CD4-positive, alpha-beta T cell (primary cell): ENCODE measurements at regions of chr1 and their contacts with region 1.

Region 1: GRCh38 chr1:200669314-200670241 is at the start of gene DDX59:
- DNase-seq: peak; percentile 75 to 95 (median 86)
- ATAC-seq: peak; percentile 91
- H3K4me3 ChIP-seq: peak within 1 kb of the TSS; percentile 82
- H3K4me3 Mint-ChIP-seq: peak within 1 kb of the TSS; percentile 93
- H3K27ac ChIP-seq: peak within 1 kb of the TSS; percentile 75 to 91
- H3K27ac Mint-ChIP-seq: peak within 1 kb of the TSS; percentile 78
- H3K4me1 ChIP-seq: peaks cover 18% of the 10 kb centered on the region
- H3K4me1 Mint-ChIP-seq: peaks cover 55% of the 10 kb centered on the region
- H3K27me3 ChIP-seq: no peaks in the 10 kb centered on the region
- H3K27me3 Mint-ChIP-seq: no peaks in the 10 kb centered on the region
- CTCF ChIP-seq: no peak
- total RNA-seq, gene DDX59: 24.7 to 27.6 TPM

Region 2: GRCh38 chr1:199913318-199913717 is 756.3 kb before region 1 on chr1:
- CTCF ChIA-PET with region 1: no interaction called
- POLR2A ChIA-PET with region 1: no interaction called
- intact Hi-C with region 1: no loop called
- DNase-seq: no peak
- ATAC-seq: no peak
- H3K4me3 ChIP-seq: no peak overlapping the region
- H3K4me3 Mint-ChIP-seq: no peak overlapping the region
- H3K27ac ChIP-seq: no peak overlapping the region
- H3K27ac Mint-ChIP-seq: no peak overlapping the region
- H3K4me1 ChIP-seq: no peaks in the 10 kb centered on the region
- H3K4me1 Mint-ChIP-seq: no peaks in the 10 kb centered on the region
- H3K27me3 ChIP-seq: no peaks in the 10 kb centered on the region
- H3K27me3 Mint-ChIP-seq: peaks cover 6% of the 10 kb centered on the region
- CTCF ChIP-seq: no peak

Region 3: GRCh38 chr1:200409761-200410565 is 259.6 kb before region 1 on chr1 and contains the start of gene ZNF281:
- CTCF ChIA-PET with region 1: no interaction called
- POLR2A ChIA-PET with region 1: interaction called, 4 read pairs
- intact Hi-C with region 1: loop called in 1 of 2 experiments (anchors 10 kb)
- DNase-seq: peak; percentile 86 to 97 (median 92)
- ATAC-seq: peak; percentile 96
- H3K4me3 ChIP-seq: peak within 1 kb of the TSS; percentile 93
- H3K4me3 Mint-ChIP-seq: peak within 1 kb of the TSS; percentile 98
- H3K27ac ChIP-seq: peak within 1 kb of the TSS; percentile 68 to 81
- H3K27ac Mint-ChIP-seq: peak within 1 kb of the TSS; percentile 87
- H3K4me1 ChIP-seq: peaks cover 25% of the 10 kb centered on the region
- H3K4me1 Mint-ChIP-seq: peaks cover 56% of the 10 kb centered on the region
- H3K27me3 ChIP-seq: no peaks in the 10 kb centered on the region
- H3K27me3 Mint-ChIP-seq: no peaks in the 10 kb centered on the region
- CTCF ChIP-seq: no peak
- total RNA-seq, gene ZNF281: 27.6 to 29.3 TPM

Region 4: GRCh38 chr1:200620273-200621131 is 49.1 kb before region 1 on chr1 and contains the start of gene KIF14:
- CTCF ChIA-PET with region 1: interaction called, 24 read pairs
- POLR2A ChIA-PET with region 1: interaction called, 35 read pairs
- intact Hi-C with region 1: loop called (anchors 1 to 2 kb)
- DNase-seq: peak; percentile 78 to 95 (median 88)
- ATAC-seq: peak; percentile 95
- H3K4me3 ChIP-seq: peak within 1 kb of the TSS; percentile 83
- H3K4me3 Mint-ChIP-seq: peak within 1 kb of the TSS; percentile 98
- H3K27ac ChIP-seq: peak within 1 kb of the TSS; percentile 23 to 52
- H3K27ac Mint-ChIP-seq: peak within 1 kb of the TSS; percentile 90
- H3K4me1 ChIP-seq: peaks cover 19% of the 10 kb centered on the region
- H3K4me1 Mint-ChIP-seq: peaks cover 31% of the 10 kb centered on the region
- H3K27me3 ChIP-seq: no peaks in the 10 kb centered on the region
- H3K27me3 Mint-ChIP-seq: no peaks in the 10 kb centered on the region
- CTCF ChIP-seq: no peak
- total RNA-seq, gene KIF14: 0.11 TPM

Region 5: GRCh38 chr1:200731654-200732332 is 62.2 kb after region 1 on chr1:
- CTCF ChIA-PET with region 1: no interaction called
- POLR2A ChIA-PET with region 1: interaction called, 44 read pairs
- intact Hi-C with region 1: no loop called
- DNase-seq: no peak
- ATAC-seq: no peak
- H3K4me3 ChIP-seq: no peak overlapping the region
- H3K4me3 Mint-ChIP-seq: no peak overlapping the region
- H3K27ac ChIP-seq: no peak overlapping the region
- H3K27ac Mint-ChIP-seq: no peak overlapping the region
- H3K4me1 ChIP-seq: no peaks in the 10 kb centered on the region
- H3K4me1 Mint-ChIP-seq: no peaks in the 10 kb centered on the region
- H3K27me3 ChIP-seq: no peaks in the 10 kb centered on the region
- H3K27me3 Mint-ChIP-seq: no peaks in the 10 kb centered on the region
- CTCF ChIP-seq: no peak

Region 6: DNA sequence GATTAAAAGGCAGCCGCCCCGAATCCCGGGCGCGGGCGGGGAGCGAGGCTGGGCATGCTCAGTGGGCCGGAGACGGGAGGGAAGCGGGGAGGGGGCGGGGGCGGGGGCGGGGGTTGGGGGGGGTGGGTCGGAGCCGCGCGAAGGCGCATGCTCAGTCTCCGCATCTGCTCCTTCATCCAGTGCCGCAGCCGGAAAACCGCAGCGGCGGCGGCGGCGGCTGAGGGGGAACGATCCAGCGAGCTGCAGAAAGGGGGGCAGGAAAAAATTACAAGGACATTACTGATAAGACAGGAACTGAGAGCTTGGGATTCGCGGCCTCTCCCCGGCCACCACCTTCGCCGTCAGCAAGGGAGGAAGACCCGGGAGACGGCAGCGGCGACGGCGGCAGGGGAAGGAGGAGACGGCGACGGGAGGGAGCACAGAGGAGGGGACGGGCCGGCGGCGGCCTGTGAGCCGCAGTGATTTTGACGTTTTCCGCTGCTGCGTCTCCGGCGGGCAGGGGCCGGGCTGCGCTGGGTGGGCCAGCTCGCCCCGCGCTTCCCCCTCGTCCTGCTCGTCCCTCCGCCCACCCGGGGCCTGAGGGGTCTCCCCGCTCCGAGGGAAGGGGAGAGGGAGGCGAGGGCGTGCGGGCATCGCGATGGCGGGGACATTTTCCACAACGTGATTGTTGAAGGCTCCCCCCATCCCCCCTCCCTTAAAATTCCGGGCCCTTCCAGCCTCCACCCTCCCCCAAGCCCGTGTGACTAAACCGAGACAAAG is 69.3 kb after region 1 on chr1 and contains the start of gene CAMSAP2:
- CTCF ChIA-PET with region 1: no interaction called
- POLR2A ChIA-PET with region 1: interaction called, 44 read pairs
- intact Hi-C with region 1: loop called (anchors 1 to 5 kb)
- DNase-seq: peak; percentile 30 to 90 (median 60)
- ATAC-seq: peak; percentile 67
- H3K4me3 ChIP-seq: peak within 1 kb of the TSS; percentile 93
- H3K4me3 Mint-ChIP-seq: peak within 1 kb of the TSS; percentile 100
- H3K27ac ChIP-seq: peak within 1 kb of the TSS; percentile 29 to 36
- H3K27ac Mint-ChIP-seq: peak within 1 kb of the TSS; percentile 90
- H3K4me1 ChIP-seq: peaks cover 17% of the 10 kb centered on the region
- H3K4me1 Mint-ChIP-seq: peaks cover 46% of the 10 kb centered on the region
- H3K27me3 ChIP-seq: no peaks in the 10 kb centered on the region
- H3K27me3 Mint-ChIP-seq: no peaks in the 10 kb centered on the region
- CTCF ChIP-seq: no peak
- total RNA-seq, gene CAMSAP2: 4.4 to 5.7 TPM

Region 7: DNA sequence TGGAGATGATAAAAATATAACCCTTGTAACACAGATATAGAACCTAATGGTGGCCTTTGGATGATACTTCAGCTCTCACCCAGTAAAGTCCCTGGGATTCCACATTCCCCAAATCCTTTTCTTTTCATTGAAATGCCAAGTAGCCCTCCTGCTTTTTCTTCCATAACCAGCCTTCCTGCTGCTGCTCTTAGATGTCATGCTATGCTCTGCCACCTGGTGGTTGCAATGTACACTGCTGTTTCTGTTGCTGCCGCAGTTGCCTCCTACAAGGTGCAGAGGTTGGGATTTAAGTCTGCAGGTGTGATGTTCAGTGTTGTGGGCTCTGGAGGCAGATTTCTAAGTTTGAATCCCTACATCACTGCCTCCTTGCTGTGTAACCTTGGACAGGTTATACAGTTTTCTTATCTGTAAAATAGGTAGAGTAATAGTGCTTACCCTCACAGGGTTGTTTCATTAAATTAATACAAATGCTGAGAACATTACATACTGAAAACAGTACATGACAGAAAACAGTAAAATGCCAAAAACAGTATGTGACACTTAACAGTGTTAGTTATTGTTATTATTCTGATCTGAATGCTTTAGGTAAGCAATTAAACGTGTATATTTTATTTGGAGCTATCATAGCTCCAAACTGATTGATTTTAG is 133.4 kb after region 1 on chr1:
- CTCF ChIA-PET with region 1: interaction called, 4 read pairs
- POLR2A ChIA-PET with region 1: no interaction called
- intact Hi-C with region 1: loop called in 1 of 2 experiments (anchors 2 kb)
- DNase-seq: peak; percentile 55 to 87 (median 67)
- ATAC-seq: peak; percentile 95
- H3K4me3 ChIP-seq: no peak overlapping the region
- H3K4me3 Mint-ChIP-seq: no peak overlapping the region
- H3K27ac ChIP-seq: no peak overlapping the region
- H3K27ac Mint-ChIP-seq: no peak overlapping the region
- H3K4me1 ChIP-seq: no peaks in the 10 kb centered on the region
- H3K4me1 Mint-ChIP-seq: peaks cover 6% of the 10 kb centered on the region
- H3K27me3 ChIP-seq: no peaks in the 10 kb centered on the region
- H3K27me3 Mint-ChIP-seq: no peaks in the 10 kb centered on the region
- CTCF ChIP-seq: peak; percentile 93

Region 8: GRCh38 chr1:201114236-201115131 is 444.9 kb after region 1 on chr1:
- CTCF ChIA-PET with region 1: no interaction called
- POLR2A ChIA-PET with region 1: no interaction called
- intact Hi-C with region 1: loop called in 1 of 2 experiments (anchors 5 kb)
- DNase-seq: peak; percentile 45 to 86 (median 64)
- ATAC-seq: peak; percentile 87
- H3K4me3 ChIP-seq: peak overlapping the region; percentile 84
- H3K4me3 Mint-ChIP-seq: peak overlapping the region; percentile 95
- H3K27ac ChIP-seq: peak overlapping the region; percentile 13 to 32
- H3K27ac Mint-ChIP-seq: peak overlapping the region; percentile 76
- H3K4me1 ChIP-seq: peaks cover 16% of the 10 kb centered on the region
- H3K4me1 Mint-ChIP-seq: peaks cover 30% of the 10 kb centered on the region
- H3K27me3 ChIP-seq: no peaks in the 10 kb centered on the region
- H3K27me3 Mint-ChIP-seq: no peaks in the 10 kb centered on the region
- CTCF ChIP-seq: peak; percentile 77